ENCODE measurements at regions of chr1 and their contacts with region 1.

Region 1: DNA sequence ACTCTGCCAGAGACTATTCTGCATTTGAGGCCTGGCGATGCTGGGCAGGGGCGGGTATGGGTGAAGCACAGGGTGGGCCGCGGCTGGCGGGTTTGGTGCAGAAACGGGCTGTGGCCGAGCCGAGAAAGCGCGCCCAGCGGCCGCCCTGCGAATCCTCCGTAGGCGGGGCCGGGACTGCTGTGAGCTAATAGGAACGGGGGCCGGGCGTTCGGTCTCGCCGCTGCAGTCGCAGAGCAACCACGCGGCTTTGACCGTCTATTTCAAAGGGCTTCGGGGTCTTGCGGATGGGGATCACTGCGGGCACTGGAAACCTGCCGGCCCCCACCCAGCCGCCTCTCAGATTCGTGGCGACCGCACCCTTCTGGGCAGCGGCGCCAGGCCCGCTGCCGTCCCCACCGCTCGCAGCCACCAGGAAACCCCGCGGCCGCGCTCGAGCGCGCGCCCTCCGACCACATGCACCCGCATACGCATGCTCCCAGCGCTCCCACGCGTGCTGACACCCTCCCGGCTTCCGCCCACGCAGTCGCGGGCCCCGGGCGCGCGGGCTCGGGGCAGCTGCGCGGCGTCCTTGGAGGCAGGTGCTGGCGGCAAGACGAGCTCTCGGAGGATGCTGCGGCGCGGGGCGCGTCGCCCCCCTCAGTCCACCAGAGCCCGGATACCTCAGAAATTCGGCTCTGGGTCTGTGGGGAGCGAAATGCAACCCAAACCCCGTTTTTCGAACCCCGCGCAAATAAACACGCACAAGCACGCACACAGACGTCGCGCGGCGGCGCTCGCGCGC is 32.6 kb downstream of the DNTTIP2 start:
- DNase-seq: peak; percentile 89
- ATAC-seq: peak; percentile 68
- H3K4me3 Mint-ChIP-seq: peak overlapping the region; percentile 95
- H3K27ac Mint-ChIP-seq: no peak overlapping the region
- H3K4me1 Mint-ChIP-seq: peaks cover 13% of the 10 kb centered on the region
- H3K27me3 Mint-ChIP-seq: peaks cover 5% of the 10 kb centered on the region
- CTCF ChIP-seq: no peak

Region 2: DNA sequence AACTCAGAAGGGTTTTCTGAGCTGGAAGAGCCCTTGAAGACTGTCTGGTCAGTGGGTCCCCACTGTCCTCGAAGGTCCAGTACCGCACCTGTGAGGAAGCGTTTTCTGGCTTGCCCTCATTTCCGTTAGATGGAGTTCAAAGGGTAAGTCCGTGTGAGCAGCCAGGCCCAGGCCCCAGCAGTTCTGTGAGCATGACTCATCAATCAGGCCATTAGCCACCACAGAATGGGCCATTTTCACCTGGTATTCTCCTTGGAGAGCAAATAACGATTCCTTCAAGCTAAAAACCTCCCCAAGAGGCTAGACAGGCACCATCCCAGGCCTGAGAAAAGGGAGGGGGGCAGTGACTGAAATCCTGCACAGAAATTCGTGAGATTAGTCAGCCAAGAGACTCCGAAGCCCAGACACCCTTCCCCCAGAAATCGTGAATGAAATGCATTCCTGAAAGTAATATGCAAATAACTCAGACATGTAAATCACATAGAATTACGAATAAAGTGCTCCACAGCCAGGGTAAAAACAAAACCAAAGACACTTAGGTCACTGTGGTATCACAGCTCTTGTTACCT is 230.7 kb before region 1 on chr1:
- CTCF ChIA-PET with region 1: interaction called, 16 read pairs
- POLR2A ChIA-PET with region 1: no interaction called
- DNase-seq: no peak
- ATAC-seq: peak; percentile 23
- H3K4me3 Mint-ChIP-seq: peak overlapping the region; percentile 24; the same call in 1 of the 2 replicates
- H3K27ac Mint-ChIP-seq: peak overlapping the region; percentile 71
- H3K4me1 Mint-ChIP-seq: peaks cover 66% of the 10 kb centered on the region
- H3K27me3 Mint-ChIP-seq: no peaks in the 10 kb centered on the region
- CTCF ChIP-seq: no peak

Region 3: GRCh38 chr1:93641527-93641926 is 204.9 kb before region 1 on chr1:
- CTCF ChIA-PET with region 1: interaction called, 38 read pairs
- POLR2A ChIA-PET with region 1: interaction called, 4 read pairs
- DNase-seq: no peak
- ATAC-seq: no peak
- H3K4me3 Mint-ChIP-seq: no peak overlapping the region
- H3K27ac Mint-ChIP-seq: peak overlapping the region; percentile 26; the same call in 1 of the 2 replicates
- H3K4me1 Mint-ChIP-seq: peaks cover 64% of the 10 kb centered on the region
- H3K27me3 Mint-ChIP-seq: no peaks in the 10 kb centered on the region
- CTCF ChIP-seq: no peak

Region 4: GRCh38 chr1:93692983-93693591 is 153.3 kb before region 1 on chr1:
- CTCF ChIA-PET with region 1: interaction called, 11 read pairs
- POLR2A ChIA-PET with region 1: no interaction called
- DNase-seq: no peak
- ATAC-seq: no peak
- H3K4me3 Mint-ChIP-seq: no peak overlapping the region
- H3K27ac Mint-ChIP-seq: no peak overlapping the region
- H3K4me1 Mint-ChIP-seq: peaks cover 20% of the 10 kb centered on the region
- H3K27me3 Mint-ChIP-seq: no peaks in the 10 kb centered on the region
- CTCF ChIP-seq: no peak

Region 5: DNA sequence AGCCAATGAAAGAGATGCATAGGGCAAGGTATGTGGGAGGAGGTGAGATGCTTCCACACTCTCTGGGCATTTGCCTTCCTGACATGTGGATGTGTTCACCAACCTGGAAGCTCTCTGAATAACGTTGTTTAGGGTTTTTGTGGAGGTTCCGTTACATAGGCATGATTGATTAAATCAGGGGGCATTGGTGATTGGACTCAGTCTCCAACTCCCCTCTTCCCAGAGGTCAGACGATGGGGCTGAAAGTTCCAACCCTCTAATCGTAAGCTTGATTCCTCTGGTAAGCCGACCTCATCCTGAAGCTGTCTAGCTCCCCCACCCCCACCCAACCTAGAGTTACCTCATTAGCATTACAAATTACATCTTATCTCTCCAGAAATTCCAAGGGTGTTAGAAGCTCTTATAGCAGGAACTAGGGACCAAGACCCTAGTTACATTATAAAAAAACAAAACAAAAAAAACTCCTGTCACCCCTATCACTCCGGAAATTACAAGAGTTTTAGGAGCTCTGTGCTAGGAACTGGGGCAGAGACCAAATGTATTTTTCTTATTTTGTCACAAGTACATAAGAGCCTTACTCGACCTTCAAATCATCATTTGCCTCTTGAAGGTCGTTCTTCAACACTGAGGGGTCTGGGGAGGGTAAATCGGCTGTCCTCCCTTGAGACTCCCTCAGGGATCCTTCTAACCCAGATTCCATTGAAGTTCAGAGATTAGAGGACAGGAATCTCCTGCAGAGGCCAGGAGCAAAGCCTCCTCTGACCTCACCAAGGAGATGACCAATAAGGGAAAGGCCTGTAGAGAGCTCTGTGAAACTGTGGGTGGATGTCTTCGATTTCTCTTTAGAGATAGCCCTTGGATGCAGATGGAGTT is 25.6 kb before region 1 on chr1:
- CTCF ChIA-PET with region 1: interaction called, 135 read pairs
- POLR2A ChIA-PET with region 1: interaction called, 13 read pairs
- DNase-seq: no peak
- ATAC-seq: peak; percentile 73
- H3K4me3 Mint-ChIP-seq: peak overlapping the region; percentile 7; the same call in 1 of the 2 replicates
- H3K27ac Mint-ChIP-seq: peak overlapping the region; percentile 88
- H3K4me1 Mint-ChIP-seq: peaks cover 69% of the 10 kb centered on the region
- H3K27me3 Mint-ChIP-seq: no peaks in the 10 kb centered on the region
- CTCF ChIP-seq: no peak

Region 6: GRCh38 chr1:93955765-93956164 is 109.4 kb after region 1 on chr1:
- CTCF ChIA-PET with region 1: no interaction called
- POLR2A ChIA-PET with region 1: no interaction called
- DNase-seq: no peak
- ATAC-seq: no peak
- H3K4me3 Mint-ChIP-seq: no peak overlapping the region
- H3K27ac Mint-ChIP-seq: no peak overlapping the region
- H3K4me1 Mint-ChIP-seq: no peaks in the 10 kb centered on the region
- H3K27me3 Mint-ChIP-seq: peaks cover 11% of the 10 kb centered on the region
- CTCF ChIP-seq: no peak